ENCODE measurements at regions of chr3 and their contacts with region 1.

Region 1: DNA sequence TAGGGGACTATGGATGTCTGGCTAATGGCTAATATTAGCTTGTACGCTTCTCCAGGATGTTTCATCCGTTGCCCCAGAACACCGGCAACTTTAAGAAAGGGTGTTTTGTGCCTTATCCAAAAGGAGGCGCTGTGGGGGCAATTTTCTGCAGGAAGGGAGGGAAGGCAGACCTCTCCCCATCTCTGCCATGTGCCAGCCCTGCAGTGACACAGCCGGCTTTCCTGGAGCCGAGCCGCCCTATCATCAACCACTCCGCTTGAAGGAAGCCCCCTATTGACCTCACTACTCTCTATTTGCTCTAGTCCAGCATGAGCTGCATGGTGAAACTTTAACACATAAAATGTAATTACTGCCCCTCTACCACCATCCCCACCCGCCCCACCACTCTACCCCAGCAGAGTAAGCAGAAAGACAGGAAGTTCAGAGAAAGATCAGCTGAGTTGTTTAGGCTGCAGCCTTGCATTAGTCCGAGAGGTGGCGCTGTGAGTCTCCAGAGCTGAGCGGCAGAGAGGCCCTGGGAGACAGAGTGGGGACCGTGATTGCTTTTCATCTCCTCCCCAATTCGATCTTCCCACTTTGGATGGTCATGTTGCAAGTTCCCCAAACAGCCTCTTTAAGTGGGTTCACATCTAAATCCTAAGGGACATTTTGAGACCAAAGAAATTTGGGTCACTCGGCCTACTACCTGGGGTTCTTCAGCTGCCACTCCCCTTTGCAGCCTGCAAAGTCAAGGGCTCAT is 24.5 kb upstream of the RAD18 start:
- DNase-seq: peak; percentile 77
- ATAC-seq: peak; percentile 68

Region 2: DNA sequence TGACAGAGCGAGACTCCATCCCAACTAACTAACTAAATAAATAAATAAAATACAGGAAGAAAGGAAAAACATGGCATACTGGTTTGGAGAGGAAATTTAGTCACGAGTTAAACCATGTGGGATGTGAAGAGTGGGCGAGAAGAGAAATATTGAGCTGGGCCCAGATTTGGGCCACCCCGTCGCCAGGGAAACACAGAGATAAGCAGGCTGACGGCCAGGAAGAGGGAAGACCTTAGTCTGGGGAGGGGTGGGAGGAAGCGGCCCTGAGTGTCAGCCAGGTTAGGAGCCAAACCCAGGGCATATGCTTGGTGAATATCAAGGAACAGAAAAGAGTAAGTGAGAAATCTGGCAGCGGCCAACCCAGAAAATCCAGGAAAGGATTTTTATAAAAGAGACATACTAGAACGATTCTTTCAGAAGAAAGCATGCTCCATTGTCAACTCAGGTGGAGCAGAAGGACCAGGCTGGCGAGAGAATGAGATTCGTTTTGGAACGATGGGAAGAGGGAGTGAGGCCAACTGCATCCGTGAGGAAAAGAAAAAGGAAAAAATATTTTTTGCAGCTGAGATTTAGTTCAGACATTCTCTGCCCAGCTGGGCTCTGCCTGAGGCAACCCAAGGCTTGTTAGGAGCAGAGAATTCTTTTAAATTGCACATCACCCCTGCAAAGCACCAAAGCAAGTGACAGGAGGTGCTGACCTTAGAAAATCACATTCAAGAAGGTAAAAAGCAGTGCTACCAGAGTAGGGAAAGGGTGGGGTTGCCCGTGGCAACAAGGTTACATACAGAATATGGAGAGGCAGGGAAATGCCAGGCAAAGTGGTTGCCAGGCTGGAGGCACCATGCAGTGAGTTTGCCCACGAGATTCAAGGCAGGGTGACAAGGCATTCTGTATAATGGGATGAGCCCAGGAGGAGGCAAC is 34.8 kb after region 1 on chr3:
- intact Hi-C with region 1: loop called (anchors 5 kb)
- DNase-seq: no peak
- ATAC-seq: no peak

Region 3: GRCh38 chr3:9067352-9067975 is 79.7 kb after region 1 on chr3:
- intact Hi-C with region 1: loop called (anchors 1 kb)
- DNase-seq: no peak
- ATAC-seq: peak; percentile 85

Region 4: DNA sequence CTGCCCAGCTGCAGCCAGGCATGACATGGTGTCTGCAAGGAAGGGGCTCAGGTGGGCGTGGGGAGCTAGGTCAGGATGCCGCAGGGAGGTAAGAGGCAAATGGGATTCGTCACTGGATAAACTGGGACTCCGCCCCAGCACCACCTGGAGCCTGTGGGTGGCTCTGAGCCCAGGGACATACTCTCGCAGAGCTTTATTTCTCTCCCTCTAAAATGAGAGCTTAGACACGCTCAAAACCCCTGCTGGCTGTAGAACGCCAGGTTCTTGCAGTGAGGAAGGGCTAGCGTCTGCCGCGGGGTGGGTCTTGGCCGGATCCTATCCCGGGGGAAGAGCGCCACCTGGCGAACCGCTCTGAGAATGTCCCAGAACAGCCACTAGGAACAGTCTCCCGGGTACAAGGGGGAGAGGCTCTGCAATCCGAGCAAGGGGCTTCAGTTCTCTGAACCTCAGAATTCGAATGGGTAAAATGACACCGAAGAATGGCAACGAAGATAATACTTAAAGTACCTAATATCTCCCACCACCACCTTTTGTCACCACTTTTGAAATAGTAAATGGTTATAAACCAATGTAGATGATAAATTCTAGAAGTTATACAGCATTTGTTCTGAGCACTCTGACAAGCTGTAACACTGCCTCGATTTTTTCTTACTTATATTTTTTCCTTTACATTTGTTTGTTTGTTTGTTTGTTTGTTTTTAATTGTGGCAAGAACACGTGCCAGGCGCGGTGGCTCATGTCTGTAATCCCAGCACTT is 314.8 kb after region 1 on chr3:
- intact Hi-C with region 1: loop called (anchors 5 kb)
- DNase-seq: peak; percentile 88
- ATAC-seq: peak; percentile 94